ENCODE measurements at regions of chr6 and their contacts with region 1.

Region 1: GRCh38 chr6:157434349-157435033 is 53.5 kb downstream of the ZDHHC14 start:
- DNase-seq: peak in 3 of 5 donors; percentile 33 to 71 (median 56)
- ATAC-seq: peak in 3 of 4 donors; percentile 55 to 63 (median 56)
- H3K4me3 ChIP-seq: no peak overlapping the region
- H3K27ac ChIP-seq: peak overlapping the region; percentile 2 to 81 (median 60)
- H3K4me1 ChIP-seq: peaks cover 3 to 92% (median 59%) of the 10 kb centered on the region in 12 donors
- H3K27me3 ChIP-seq: no peaks in the 10 kb centered on the region
- CTCF ChIP-seq: no peak
- POLR2A ChIP-seq: no peak

Region 2: DNA sequence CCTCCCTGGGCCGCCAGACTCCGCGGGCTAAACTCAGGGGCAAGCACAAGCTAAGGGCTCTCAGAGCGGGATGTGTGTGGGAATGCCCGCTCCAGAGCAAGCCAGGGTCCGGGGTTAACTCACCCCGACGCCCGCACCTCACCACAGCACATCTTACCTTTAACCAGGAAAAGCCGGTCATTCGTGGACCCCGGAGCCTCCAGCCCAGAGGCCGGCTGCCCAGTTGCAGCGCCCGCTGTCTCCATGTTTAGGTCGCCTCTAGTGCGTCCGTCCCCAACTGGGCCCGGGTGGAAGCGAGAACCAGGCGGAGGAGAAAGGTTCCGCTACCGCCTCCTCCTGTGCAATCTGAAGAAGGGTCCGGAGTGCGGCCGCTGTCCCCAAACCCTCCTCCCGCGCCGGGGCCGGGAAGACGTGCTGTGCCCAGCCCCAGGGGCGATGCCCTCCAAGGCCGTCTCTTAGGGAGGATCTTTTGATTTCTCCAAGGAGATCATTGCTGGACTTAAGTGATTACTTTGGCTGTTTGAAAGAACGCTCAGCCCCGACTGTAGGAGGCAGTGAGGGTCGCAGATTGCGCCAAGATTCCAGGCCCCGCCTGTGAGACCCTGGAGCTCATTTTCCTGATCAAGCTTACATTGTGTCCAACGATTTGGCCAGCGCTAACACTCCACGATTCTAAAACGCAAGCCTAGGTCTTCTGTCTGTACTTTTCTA is 111.1 kb before region 1 on chr6 and contains the start of gene TMEM242:
- intact Hi-C with region 1: loop called in 1 of 10 experiments (anchors 10 kb)
- DNase-seq: peak; percentile 90 to 96 (median 93)
- ATAC-seq: peak; percentile 92 to 98 (median 96)
- H3K4me3 ChIP-seq: peak within 1 kb of the TSS; percentile 47 to 90 (median 75)
- H3K27ac ChIP-seq: peak within 1 kb of the TSS; percentile 67 to 97 (median 96)
- H3K4me1 ChIP-seq: peaks cover 0 to 47% (median 20%) of the 10 kb centered on the region in 12 donors
- H3K27me3 ChIP-seq: no peaks in the 10 kb centered on the region
- CTCF ChIP-seq: peak; percentile 12 to 50 (median 30)
- POLR2A ChIP-seq: peak in 1 of 2 donors; percentile 59
- total RNA-seq, gene TMEM242: 5.9 to 18.3 (median 13.2) TPM

Region 3: DNA sequence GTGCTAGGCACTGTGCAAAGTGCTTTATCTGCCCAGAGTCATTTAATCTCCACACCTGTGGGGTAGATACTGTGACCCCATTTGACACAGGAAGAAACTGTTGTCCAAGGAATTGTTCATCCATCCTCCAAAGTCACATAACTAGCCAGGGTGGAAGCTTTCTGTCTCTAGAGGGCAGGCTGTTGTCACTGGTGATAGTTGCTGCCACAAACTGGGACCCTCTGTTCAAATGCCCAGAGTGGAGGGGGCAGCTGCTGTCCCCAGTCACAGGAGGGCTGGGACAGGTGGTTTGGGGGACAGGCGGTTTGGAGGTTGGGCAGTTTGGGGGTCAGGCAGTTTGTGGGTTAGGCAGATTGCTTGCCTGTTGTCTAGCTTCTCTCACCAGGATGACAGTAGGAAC is 95.1 kb before region 1 on chr6:
- intact Hi-C with region 1: loop called in 1 of 10 experiments (anchors 10 kb)
- DNase-seq: no peak
- ATAC-seq: no peak
- H3K4me3 ChIP-seq: no peak overlapping the region
- H3K27ac ChIP-seq: no peak overlapping the region
- H3K4me1 ChIP-seq: no peaks in the 10 kb centered on the region
- H3K27me3 ChIP-seq: no peaks in the 10 kb centered on the region
- CTCF ChIP-seq: no peak
- POLR2A ChIP-seq: no peak

Region 4: GRCh38 chr6:157753291-157753690 is 318.8 kb after region 1 on chr6:
- intact Hi-C with region 1: no loop called
- DNase-seq: no peak
- ATAC-seq: no peak
- H3K4me3 ChIP-seq: no peak overlapping the region
- H3K27ac ChIP-seq: no peak overlapping the region
- H3K4me1 ChIP-seq: peaks cover 0 to 18% (median 12%) of the 10 kb centered on the region in 12 donors
- H3K27me3 ChIP-seq: no peaks in the 10 kb centered on the region
- CTCF ChIP-seq: no peak
- POLR2A ChIP-seq: no peak

Measured in heart left ventricle (tissue), 16 donors.